CD8-positive, alpha-beta memory T cell (primary cell): ENCODE measurements at regions of chr7 and their contacts with region 1.

Region 1: DNA sequence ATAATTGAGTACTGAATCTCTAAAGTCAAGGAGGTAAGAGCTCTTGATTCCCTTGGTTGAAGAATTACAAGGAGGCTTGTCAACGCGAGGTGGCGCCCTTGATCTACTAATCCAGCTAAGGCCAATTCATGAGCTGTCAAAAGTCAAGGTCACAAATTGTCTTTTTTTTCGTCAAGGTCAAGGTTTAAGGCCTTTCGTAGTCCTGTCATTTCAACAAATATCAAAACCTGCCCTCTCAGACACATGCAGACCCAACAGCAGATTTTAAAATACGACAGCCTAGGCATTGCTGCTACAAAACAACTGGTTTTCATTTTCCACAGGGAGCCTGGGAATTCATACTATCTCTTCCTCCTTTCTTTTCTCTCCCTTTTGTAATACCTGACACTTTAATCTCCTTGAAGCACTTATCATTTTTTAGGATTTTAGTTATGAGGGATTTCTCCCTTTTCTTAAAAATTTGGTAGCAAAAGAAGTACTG is 3.6 kb downstream of the HOXA13 start:
- DNase-seq: peak; percentile 62 to 84 (median 75)
- H3K4me3 ChIP-seq: no peak overlapping the region
- H3K4me3 Mint-ChIP-seq: peak overlapping the region in 2 of 7 donors; percentile 41 to 53
- H3K27ac ChIP-seq: no peak overlapping the region
- H3K27ac Mint-ChIP-seq: peak overlapping the region in 1 of 8 donors; percentile 38
- H3K4me1 ChIP-seq: peaks cover 33% of the 10 kb centered on the region
- H3K4me1 Mint-ChIP-seq: peaks cover 32 to 48% (median 36%) of the 10 kb centered on the region in 3 donors
- H3K27me3 ChIP-seq: peaks cover 77% of the 10 kb centered on the region
- H3K27me3 Mint-ChIP-seq: peaks cover 81 to 90% of the 10 kb centered on the region in 2 donors

Region 2: GRCh38 chr7:27185013-27185855 is 11.1 kb before region 1 on chr7 and contains the start of gene HOXA11:
- CTCF ChIA-PET with region 1: interaction called, 15 read pairs
- POLR2A ChIA-PET with region 1: interaction called, 3 read pairs
- DNase-seq: peak in 1 of 5 donors; percentile 43
- H3K4me3 ChIP-seq: peak within 1 kb of the TSS; percentile 34
- H3K4me3 Mint-ChIP-seq: peak within 1 kb of the TSS; percentile 70 to 89 (median 84)
- H3K27ac ChIP-seq: no peak within 1 kb of the TSS
- H3K27ac Mint-ChIP-seq: peak within 1 kb of the TSS in 6 of 8 donors; percentile 1 to 82 (median 52)
- H3K4me1 ChIP-seq: peaks cover 54% of the 10 kb centered on the region
- H3K4me1 Mint-ChIP-seq: peaks cover 48 to 63% (median 51%) of the 10 kb centered on the region in 3 donors
- H3K27me3 ChIP-seq: peaks cover 82% of the 10 kb centered on the region
- H3K27me3 Mint-ChIP-seq: peaks cover 82 to 88% of the 10 kb centered on the region in 2 donors
- total RNA-seq, gene HOXA11: not detected

Region 3: DNA sequence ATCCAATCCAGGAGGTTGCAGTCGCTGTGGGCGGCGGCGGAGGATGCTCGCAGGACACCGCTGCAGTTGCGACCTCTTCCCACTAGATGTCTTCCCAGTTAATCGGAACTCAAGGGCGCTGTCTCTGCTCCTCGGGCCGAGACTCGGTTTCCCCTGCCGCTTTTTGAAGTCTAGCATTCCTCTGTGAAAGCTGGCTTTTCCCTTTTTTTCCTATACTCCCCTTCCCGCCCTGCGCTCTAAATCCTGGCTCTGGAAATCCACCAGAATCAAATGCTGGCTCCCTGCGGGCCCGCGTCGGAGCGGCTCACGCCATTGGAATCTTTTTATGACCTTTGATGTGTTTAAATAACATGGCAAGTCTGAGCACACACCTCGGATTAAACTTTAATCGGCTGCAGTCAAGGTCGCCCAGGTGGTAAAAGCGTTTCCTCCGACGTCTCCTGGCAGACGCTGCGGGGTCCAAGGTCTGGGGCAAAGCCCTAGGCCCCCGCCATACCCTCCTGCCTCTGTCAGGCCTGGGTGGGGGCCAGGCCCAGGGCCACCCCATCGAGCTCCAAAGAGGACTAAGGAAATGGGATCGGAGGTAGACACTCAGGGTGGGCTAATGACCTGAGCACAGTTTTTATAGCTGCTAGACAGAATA is 14.2 kb after region 1 on chr7:
- CTCF ChIA-PET with region 1: interaction called, 22 read pairs
- POLR2A ChIA-PET with region 1: no interaction called
- DNase-seq: no peak
- H3K4me3 ChIP-seq: peak overlapping the region; percentile 21
- H3K4me3 Mint-ChIP-seq: peak overlapping the region in 6 of 7 donors; percentile 48 to 84 (median 58)
- H3K27ac ChIP-seq: no peak overlapping the region
- H3K27ac Mint-ChIP-seq: peak overlapping the region in 1 of 8 donors; percentile 15
- H3K4me1 ChIP-seq: peaks cover 3% of the 10 kb centered on the region
- H3K4me1 Mint-ChIP-seq: peaks cover 9 to 19% (median 14%) of the 10 kb centered on the region in 3 donors
- H3K27me3 ChIP-seq: peaks cover 59% of the 10 kb centered on the region
- H3K27me3 Mint-ChIP-seq: peaks cover 75 to 94% of the 10 kb centered on the region in 2 donors

Region 4: DNA sequence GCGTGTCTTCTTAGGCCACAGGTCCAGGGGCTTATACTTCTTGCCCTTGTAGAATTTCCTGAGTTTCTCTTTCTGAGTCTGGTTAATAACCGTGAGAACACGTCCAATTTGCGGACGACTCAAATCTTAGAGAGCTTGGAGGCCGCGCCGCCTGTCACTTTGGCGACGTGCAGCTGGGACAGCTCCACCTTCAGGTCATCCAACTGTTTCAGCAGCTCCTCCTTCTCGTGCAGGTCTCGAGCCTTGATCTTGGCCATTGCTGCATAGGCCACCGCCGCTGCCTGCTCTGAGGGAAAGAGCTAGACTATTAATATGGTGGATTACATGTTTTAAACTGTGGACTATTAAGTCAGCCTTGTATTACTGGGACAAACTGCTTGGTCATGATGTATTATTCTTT is 73.1 kb after region 1 on chr7:
- CTCF ChIA-PET with region 1: no interaction called
- POLR2A ChIA-PET with region 1: no interaction called
- DNase-seq: no peak
- H3K4me3 ChIP-seq: no peak overlapping the region
- H3K4me3 Mint-ChIP-seq: no peak overlapping the region
- H3K27ac ChIP-seq: no peak overlapping the region
- H3K27ac Mint-ChIP-seq: peak overlapping the region in 1 of 8 donors; percentile 77
- H3K4me1 ChIP-seq: no peaks in the 10 kb centered on the region
- H3K4me1 Mint-ChIP-seq: no peaks in the 10 kb centered on the region
- H3K27me3 ChIP-seq: no peaks in the 10 kb centered on the region
- H3K27me3 Mint-ChIP-seq: peaks cover 4 to 22% of the 10 kb centered on the region in 2 donors

Region 5: GRCh38 chr7:28020302-28020940 is 824.1 kb after region 1 on chr7:
- CTCF ChIA-PET with region 1: interaction called, 16 read pairs
- POLR2A ChIA-PET with region 1: no interaction called
- DNase-seq: peak in 3 of 5 donors; percentile 2 to 46 (median 38)
- H3K4me3 ChIP-seq: no peak overlapping the region
- H3K4me3 Mint-ChIP-seq: no peak overlapping the region
- H3K27ac ChIP-seq: no peak overlapping the region
- H3K27ac Mint-ChIP-seq: no peak overlapping the region
- H3K4me1 ChIP-seq: no peaks in the 10 kb centered on the region
- H3K4me1 Mint-ChIP-seq: peaks cover 0 to 7% (median 6%) of the 10 kb centered on the region in 3 donors
- H3K27me3 ChIP-seq: no peaks in the 10 kb centered on the region
- H3K27me3 Mint-ChIP-seq: peaks cover 0 to 3% of the 10 kb centered on the region in 2 donors